Right cardiac atrium (tissue), 5 donors: ENCODE measurements at regions of chr9 and their contacts with region 1.

Region 1: DNA sequence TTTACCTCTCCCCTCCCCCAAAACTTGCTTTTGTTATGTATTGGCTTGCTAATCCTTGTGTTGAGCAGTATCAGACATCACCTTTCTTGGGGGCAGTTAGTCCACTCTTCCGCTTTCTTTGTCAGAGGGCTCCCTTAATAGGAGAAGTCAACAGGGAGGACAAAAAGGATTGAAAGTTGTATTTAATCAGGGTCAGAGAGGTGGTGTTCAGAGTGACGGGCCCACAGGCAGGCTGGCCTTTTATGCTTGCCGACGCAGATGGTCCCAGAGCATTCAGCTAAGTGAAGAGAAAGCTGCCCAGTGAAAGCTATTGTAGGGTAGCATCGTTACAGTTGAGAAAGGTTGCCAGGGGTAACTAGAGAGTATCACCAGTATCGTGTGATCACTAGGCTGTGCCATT is 131.1 kb downstream of the ZCCHC7 start:
- DNase-seq: no peak
- ATAC-seq: no peak
- H3K4me3 ChIP-seq: no peak overlapping the region
- H3K27ac ChIP-seq: no peak overlapping the region
- H3K4me1 ChIP-seq: no peaks in the 10 kb centered on the region
- H3K27me3 ChIP-seq: no peaks in the 10 kb centered on the region

Region 2: DNA sequence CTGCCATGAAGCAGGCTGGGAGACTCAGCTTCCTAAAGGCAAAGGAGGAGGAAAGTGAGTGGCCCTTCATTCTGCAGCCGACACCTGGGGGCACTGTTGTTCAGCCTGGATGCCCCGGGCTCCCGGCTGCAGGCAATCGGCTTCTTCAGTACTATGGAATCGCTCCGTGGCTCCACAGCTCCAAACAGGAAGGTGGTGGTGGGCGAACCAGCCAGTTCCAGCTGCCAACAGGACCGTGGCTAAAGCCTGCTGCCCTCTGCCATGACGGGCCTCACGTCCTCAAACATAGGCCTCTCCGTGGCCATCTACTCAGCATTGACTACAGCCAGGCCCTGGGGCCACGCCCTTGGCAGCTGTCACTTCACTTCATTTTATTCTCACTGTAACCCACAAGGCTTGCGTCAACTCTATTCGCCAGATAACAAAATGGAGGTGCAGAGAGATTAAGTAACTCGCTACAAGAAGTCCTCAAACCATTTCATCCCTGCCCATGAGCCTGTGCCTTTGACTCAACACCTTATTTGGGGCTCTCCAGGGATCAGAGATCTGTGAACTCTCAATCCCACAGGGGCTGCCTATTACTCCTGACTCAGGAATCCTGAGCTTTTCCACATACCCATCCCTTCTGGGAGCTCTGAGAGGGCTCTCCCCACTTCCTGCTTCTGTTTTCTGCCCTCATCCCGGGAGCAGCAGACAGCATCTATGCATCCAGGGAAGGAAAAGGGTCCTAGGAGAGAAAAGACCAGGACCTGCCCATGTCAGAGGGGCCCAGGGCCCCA is 255.3 kb before region 1 on chr9:
- intact Hi-C with region 1: loop called in 1 of 4 experiments (anchors 10 kb)
- DNase-seq: peak; percentile 44 to 67 (median 61)
- ATAC-seq: peak; percentile 65 to 76
- H3K4me3 ChIP-seq: no peak overlapping the region
- H3K27ac ChIP-seq: no peak overlapping the region
- H3K4me1 ChIP-seq: no peaks in the 10 kb centered on the region
- H3K27me3 ChIP-seq: no peaks in the 10 kb centered on the region

Region 3: DNA sequence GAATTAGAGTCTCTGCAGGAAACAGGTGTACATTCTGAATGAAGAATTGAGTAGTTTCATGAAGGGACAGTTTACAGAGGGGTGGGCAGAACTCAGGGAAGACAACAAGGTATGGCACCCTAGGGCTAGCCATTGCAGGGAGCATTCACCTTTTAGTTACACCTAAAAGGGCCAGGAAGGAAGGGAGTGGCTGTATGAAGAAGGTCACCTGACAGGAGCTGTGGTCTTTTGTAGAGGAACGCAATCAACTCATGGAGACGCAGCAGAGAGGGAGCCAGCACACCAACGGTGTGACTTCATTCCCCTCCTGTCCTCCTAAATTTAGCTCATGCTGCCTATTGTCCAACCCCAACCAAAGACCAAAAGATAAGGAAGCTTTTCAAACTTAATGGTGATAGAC is 143.8 kb before region 1 on chr9:
- intact Hi-C with region 1: no loop called
- DNase-seq: no peak
- ATAC-seq: no peak
- H3K4me3 ChIP-seq: no peak overlapping the region
- H3K27ac ChIP-seq: no peak overlapping the region
- H3K4me1 ChIP-seq: no peaks in the 10 kb centered on the region
- H3K27me3 ChIP-seq: no peaks in the 10 kb centered on the region